ENCODE measurements at regions of chr1 and their contacts with region 1.

Region 1: DNA sequence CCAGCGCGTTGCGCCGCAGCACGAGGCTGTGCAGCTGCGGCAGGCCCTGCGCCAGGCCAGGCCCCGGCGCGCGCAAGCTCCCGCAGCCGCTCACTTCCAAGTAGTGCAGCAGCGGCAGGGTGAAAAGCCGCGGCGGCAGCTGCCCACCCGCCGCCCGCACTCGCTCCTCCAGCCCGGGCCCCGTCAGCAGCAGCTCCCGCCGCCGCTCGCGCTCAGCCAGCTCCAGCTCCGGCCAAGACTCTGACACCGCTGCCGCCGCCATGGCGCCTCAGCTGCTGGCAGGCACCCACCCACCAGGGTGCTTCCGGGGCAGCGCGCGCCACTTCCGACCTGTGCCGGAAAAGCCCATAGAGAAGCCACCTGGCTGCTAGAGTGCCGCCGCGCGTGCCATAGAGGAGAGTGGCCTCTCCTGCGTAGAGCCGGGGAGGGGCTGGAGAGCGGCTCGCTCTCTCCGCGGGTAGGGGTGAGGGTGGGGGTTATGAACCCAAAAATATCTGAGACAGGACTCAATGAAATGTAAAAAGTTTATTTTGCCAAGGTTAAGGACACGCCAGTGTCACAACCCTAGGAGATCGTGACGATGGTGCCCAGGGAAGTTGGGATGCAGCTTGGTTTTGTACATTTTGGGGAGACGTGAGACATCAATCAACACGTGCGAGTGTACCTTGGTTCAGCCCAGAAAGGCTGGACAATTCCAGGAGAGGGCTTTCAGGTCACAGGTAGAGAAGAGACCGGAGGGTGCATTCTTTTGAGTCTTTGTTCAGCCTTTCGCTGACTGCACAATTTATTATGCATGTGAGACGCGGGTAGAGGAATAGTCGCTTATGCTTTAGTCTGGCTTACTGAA is at the start of gene LRRC47:
- DNase-seq: peak; percentile 97
- ATAC-seq: peak; percentile 98
- H3K4me3 ChIP-seq: peak within 1 kb of the TSS; percentile 81
- H3K27ac ChIP-seq: no peak within 1 kb of the TSS
- H3K4me1 ChIP-seq: peaks cover 27% of the 10 kb centered on the region
- H3K27me3 ChIP-seq: no peaks in the 10 kb centered on the region
- CTCF ChIP-seq: no peak
- total RNA-seq, gene LRRC47: 77.4 and 102 TPM in 2 replicates

Region 2: GRCh38 chr1:3695326-3696217 is 100.9 kb before region 1 on chr1:
- CTCF ChIA-PET with region 1: no interaction called
- POLR2A ChIA-PET with region 1: no interaction called
- intact Hi-C with region 1: loop called (anchors 1 kb)
- DNase-seq: peak; percentile 71
- ATAC-seq: peak; percentile 94
- H3K4me3 ChIP-seq: peak overlapping the region; percentile 15; the same call in 1 of the 2 replicates
- H3K27ac ChIP-seq: no peak overlapping the region
- H3K4me1 ChIP-seq: no peaks in the 10 kb centered on the region
- H3K27me3 ChIP-seq: peaks cover 38% of the 10 kb centered on the region
- CTCF ChIP-seq: peak; percentile 93

Region 3: DNA sequence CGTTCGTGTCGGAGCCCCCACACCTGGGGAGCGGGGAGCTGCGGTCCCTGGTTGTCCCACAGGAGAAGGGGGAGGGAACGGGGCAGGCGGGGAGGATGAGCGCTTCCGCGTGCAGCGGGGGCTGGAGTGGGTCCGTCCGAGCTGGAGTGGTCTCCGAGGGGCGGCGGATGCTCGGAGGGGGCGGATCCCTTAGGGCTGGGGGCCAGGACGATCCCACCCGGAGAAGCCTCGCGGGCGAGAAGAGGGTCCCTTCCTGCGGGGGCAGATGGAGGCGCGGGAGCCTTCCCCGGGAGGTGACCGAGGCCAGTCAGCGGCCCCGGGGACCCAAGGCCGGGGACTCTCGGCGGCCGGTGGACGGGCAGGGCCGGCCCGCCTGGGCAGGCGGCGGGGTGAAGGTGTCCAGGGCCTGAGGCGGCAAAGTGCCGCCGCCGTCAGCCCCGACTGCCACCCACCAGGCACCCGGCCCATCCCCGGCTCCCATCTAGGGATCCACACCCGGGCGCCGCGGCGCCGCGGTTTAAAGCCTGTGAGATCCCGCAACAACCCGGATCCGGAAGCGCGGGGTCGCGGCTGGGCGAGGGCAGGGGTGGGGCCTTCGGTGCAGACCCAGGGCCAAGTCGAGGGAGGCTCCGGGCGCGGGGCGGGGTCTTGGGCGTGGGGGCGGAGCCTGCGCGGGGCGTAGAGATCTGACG is 49.5 kb before region 1 on chr1:
- CTCF ChIA-PET with region 1: no interaction called
- POLR2A ChIA-PET with region 1: no interaction called
- intact Hi-C with region 1: loop called (anchors 2 kb)
- DNase-seq: peak; percentile 92
- ATAC-seq: peak; percentile 90
- H3K4me3 ChIP-seq: peak overlapping the region; percentile 87
- H3K27ac ChIP-seq: no peak overlapping the region
- H3K4me1 ChIP-seq: peaks cover 31% of the 10 kb centered on the region
- H3K27me3 ChIP-seq: peaks cover 20% of the 10 kb centered on the region
- CTCF ChIP-seq: no peak

Region 4: DNA sequence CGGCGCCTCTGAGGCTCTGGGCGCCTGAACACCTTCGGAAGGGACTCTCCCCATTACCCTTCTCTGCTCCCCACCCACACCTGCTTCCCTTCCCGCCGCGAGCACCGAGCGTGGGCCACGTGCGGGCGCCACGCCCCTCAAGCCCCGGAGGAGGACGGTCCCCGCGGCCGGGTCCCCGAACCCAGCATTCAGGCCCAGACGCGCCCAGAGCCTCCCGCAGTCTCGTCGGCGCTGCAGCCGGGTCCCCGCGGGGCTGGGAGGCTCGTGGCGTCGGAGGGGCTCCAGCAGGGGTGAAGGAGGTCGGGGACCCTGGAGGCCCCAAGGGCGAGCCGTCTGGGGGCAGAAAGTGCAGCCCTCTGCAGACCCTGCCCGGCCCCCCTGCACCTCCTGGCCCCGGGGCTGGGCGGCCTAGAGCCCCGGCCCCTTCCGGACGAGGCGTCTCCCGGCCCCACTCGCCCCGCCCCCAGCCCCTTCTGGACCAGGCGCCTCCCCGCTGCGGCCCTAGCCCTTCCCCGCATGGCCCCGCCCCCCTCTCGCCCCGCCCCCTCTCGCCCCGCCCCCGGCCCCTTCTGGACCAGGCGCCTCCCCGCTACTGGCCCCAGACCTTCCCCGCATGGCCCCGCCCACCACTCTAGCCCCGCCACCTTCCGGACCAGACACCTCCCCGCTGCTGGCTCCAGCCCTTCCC is 24.3 kb before region 1 on chr1:
- CTCF ChIA-PET with region 1: no interaction called
- POLR2A ChIA-PET with region 1: no interaction called
- intact Hi-C with region 1: loop called (anchors 2 kb)
- DNase-seq: peak; percentile 89
- ATAC-seq: peak; percentile 79
- H3K4me3 ChIP-seq: peak overlapping the region; percentile 82
- H3K27ac ChIP-seq: no peak overlapping the region
- H3K4me1 ChIP-seq: peaks cover 13% of the 10 kb centered on the region; the same call in 1 of the 2 replicates
- H3K27me3 ChIP-seq: 0 out of 2 replicates have a peak, but pooled peaks cover 2% of the 10 kb centered on the region
- CTCF ChIP-seq: no peak

Region 5: DNA sequence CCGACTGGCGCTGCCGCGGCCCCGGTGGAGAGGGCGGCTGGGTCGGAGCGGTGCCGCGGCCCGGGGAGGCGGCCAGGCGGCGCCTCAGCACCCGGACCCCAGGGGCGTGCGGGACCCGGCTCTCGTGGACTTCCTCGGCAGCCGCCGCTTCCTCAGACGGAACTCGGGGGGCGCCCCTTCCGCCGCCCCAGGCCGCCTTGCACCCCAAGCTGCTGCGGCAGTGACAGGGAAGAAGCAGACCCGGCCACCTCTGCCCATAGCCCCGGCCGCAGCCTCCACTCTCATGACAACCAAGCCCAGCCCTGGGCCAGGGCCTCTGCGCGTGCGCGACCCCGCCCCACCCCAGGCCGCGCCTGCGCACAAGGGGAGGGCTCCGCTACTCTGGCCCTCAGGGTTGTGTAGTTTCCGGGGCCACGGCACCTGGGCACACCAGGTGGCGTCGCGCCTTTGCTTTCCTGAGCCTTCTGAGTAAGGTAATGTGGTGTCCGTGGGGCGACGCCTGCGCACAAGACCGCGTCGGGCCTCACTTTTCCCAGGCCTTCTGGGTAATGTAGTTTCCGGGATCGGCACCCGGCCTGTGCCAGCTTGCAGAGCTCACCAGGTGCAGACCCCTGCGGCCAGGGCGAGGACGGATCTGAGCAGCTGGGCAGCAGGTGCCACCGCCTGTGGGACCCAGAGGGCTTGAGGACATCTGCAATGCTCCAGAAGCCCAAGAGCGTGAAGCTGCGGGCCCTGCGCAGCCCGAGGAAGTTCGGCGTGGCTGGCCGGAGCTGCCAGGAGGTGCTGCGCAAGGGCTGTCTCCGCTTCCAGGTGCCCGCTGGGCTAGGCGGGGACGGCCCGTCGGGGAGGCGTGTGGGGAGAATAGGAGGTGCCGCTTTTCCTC is 60.7 kb after region 1 on chr1 and contains the starts of genes CEP104 and DFFB:
- CTCF ChIA-PET with region 1: no interaction called
- POLR2A ChIA-PET with region 1: interaction called, 3 read pairs
- intact Hi-C with region 1: loop called (anchors 1 kb)
- DNase-seq: peak; percentile 100
- ATAC-seq: peak; percentile 91
- H3K4me3 ChIP-seq: peak within 1 kb of the TSS; percentile 83
- H3K27ac ChIP-seq: no peak within 1 kb of the TSS
- H3K4me1 ChIP-seq: peaks cover 18% of the 10 kb centered on the region
- H3K27me3 ChIP-seq: no peaks in the 10 kb centered on the region
- CTCF ChIP-seq: peak; percentile 62
- total RNA-seq, gene CEP104: 60.9 and 64.1 TPM in 2 replicates
- total RNA-seq, gene DFFB: 17.1 and 19.6 TPM in 2 replicates

Region 6: DNA sequence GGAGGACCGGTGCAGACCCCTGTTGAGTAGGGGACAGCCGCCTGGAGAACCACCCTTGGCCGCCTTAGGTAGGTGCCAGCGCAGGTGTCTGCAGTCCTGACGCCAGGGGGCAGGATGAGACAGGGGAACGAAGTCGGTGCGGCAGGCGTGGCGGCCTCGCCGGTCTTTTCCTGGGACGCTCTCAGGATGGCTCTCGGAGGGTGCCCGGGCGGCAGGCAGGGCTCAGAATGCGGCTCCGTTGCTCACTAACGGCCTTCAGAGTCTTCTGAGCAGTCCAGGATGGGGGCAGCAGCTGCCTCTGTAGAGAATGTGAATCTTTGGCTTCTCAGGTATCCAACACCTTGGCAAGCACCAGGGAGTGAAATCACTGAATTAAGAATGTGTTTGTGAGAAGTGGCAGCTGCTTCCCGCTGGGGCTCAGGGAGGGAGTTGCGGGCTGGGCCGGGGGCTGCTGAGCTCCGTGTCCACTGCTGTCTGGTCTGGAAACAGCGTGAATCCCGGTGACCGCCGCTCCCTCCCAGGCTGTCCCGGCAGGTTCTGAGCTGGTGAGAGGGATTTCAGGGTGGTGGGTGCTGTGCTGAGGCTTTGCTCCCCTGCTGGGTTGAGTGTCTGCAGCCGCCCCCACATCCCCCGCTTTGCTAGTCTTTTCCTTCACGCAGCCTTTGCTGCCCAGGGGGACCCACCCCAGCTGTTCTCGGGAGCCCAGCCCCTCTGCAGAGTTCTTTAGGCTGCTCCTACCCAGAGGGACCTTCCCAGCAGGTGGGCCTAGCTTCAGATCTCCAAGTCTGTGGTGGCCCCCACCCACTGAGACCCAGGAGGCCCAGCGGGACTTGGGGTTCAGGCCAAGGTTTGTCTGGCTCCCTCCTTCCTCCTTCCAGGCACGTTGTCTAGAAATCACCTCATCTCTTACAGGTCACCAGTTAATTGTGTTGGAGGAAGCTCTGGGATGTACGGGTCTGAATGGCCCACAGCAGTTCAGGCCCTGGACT is 114.7 kb after region 1 on chr1:
- CTCF ChIA-PET with region 1: no interaction called
- POLR2A ChIA-PET with region 1: no interaction called
- intact Hi-C with region 1: no loop called
- DNase-seq: peak; percentile 92
- ATAC-seq: peak; percentile 97
- H3K4me3 ChIP-seq: peak overlapping the region; percentile 48
- H3K27ac ChIP-seq: no peak overlapping the region
- H3K4me1 ChIP-seq: peaks cover 4% of the 10 kb centered on the region; the same call in 1 of the 2 replicates
- H3K27me3 ChIP-seq: peaks cover 19% of the 10 kb centered on the region; the same call in 1 of the 2 replicates
- CTCF ChIP-seq: peak; percentile 97

Region 7: GRCh38 chr1:4027492-4028138 is 231.2 kb after region 1 on chr1:
- CTCF ChIA-PET with region 1: no interaction called
- POLR2A ChIA-PET with region 1: no interaction called
- intact Hi-C with region 1: no loop called
- DNase-seq: no peak
- ATAC-seq: no peak
- H3K4me3 ChIP-seq: no peak overlapping the region
- H3K27ac ChIP-seq: no peak overlapping the region
- H3K4me1 ChIP-seq: no peaks in the 10 kb centered on the region
- H3K27me3 ChIP-seq: peaks cover 81% of the 10 kb centered on the region
- CTCF ChIP-seq: no peak

Measured in PC-3 (cell line).